Cardiac septum (tissue), 1 donor: ENCODE measurements at regions of chr6 and their contacts with region 1.

Region 1: GRCh38 chr6:35688581-35689322 is at the start of gene FKBP5:
- DNase-seq: peak; percentile 98
- total RNA-seq, gene FKBP5: 29.7 TPM

Region 2: GRCh38 chr6:35601331-35602132 is 87.2 kb before region 1 on chr6:
- intact Hi-C with region 1: loop called (anchors 1 kb)
- DNase-seq: peak; percentile 77

Region 3: DNA sequence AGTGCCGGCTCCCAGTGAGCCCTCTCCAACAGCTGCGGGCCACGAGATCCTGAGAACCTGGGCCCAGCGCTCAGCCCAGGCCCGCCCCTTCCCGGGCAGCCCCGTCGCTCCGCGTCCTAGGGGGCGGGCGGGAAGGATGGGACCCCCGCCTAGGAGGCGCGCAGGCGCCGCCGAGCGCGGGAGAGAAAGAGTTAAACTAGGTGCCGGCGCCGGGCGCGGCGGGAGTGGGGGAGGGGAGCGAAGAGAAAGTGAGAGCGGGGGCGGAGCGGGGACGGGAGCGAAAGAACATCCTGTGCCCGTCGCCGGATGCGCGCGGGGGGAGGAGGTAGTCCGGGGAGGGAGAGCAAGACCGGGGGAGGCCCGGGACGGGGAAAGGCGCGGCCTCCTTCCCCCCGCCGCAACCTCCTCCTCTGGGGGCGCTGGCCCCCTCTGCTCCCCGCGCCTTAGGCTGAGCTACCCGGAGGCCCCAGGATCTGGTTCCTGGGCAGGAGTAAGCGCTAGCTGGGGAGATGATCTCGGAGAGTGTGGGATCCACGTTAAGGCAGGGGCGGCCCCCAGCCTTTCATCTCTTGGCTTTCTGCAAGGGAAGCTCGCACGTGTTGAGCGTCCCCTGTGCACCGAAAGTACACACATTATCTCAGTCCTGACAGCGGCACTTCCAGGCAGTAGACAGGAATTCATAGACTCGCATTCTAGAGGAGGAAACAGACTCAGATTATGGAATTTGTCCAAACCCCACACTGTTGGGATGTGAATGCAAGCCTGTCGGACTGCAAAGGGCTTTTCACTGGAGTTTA is 43.2 kb after region 1 on chr6:
- intact Hi-C with region 1: loop called (anchors 1 kb)
- DNase-seq: peak; percentile 99